Endothelial cell of umbilical vein (primary cell): ENCODE measurements at regions of chr13 and their contacts with region 1.

Region 1: DNA sequence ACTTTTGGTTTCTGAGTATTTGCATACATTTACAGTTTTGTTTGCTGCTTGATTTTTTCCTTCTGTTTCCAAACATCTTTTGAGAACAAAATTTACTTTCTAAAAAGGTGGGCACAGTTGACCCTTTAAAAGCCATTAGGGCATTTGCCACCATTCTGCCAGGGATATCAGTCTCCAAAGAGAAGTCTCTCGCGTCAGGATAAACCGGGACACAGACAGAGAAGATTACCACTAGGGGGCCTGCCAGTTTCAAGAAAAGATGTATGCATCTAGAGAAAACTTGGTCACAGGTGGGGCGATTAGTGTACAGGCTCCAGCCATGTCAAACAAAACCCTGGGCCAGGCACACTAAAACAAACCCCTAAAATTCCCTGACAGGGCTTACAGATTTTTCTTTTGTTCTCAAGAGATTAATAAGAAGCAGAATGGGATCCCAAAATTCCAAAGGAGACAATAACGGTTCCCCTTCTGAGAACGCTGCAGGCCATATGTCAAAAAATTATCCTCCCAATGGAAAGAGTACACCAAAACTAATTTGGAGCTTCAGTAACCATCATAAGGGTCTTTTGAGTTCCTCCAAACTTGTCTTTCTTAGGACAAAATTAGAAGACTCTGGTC is 10.7 kb upstream of the PABPC3 start:
- DNase-seq: peak; percentile 27
- H3K4me3 ChIP-seq: no peak overlapping the region
- H3K27ac ChIP-seq: no peak overlapping the region
- H3K4me1 ChIP-seq: no peaks in the 10 kb centered on the region
- H3K27me3 ChIP-seq: peaks cover 2 to 4% of the 10 kb centered on the region in 2 experiments
- CTCF ChIP-seq: peak; percentile 59 to 66
- POLR2A ChIP-seq: no peak

Region 2: DNA sequence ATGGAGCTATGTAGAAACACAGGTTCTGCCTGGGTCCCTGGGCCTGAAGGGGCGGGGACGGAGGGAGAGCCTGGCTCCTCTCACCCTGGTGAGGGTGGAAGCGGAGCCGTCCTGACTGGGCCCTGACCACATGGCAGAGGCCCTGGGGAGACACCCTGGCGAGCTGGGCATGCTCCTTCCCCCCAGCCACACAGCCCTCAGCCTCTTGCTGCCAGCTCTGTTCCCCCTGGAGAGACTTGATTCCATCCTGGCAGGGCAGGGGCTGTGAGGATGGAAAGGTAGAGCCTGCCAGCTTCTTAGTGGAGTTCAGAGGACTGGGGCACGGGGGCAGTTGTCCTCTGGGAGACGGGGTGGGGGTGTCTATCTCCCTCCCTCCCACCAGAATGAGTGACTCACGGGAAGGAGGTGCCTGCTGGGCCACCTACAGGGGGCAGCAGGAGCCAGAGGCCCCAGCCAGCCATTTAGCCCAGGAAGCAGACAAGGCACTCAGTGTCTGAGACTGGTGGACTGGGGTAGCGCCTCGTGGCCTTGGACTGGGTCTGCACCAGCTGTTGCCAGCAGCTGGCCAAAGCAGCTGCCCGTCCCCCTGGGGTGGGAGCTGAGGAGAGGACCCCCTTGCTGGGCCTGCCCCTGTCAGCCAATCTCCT is 344.1 kb before region 1 on chr13:
- CTCF ChIA-PET with region 1: no interaction called
- POLR2A ChIA-PET with region 1: no interaction called
- dilution Hi-C with region 1: no loop called
- intact Hi-C with region 1: no loop called
- DNase-seq: no peak
- H3K4me3 ChIP-seq: no peak overlapping the region
- H3K27ac ChIP-seq: no peak overlapping the region
- H3K4me1 ChIP-seq: no peaks in the 10 kb centered on the region
- H3K27me3 ChIP-seq: peaks cover 5 to 14% of the 10 kb centered on the region in 2 experiments
- CTCF ChIP-seq: peak in 1 of 2 donors; percentile 33
- POLR2A ChIP-seq: no peak

Region 3: DNA sequence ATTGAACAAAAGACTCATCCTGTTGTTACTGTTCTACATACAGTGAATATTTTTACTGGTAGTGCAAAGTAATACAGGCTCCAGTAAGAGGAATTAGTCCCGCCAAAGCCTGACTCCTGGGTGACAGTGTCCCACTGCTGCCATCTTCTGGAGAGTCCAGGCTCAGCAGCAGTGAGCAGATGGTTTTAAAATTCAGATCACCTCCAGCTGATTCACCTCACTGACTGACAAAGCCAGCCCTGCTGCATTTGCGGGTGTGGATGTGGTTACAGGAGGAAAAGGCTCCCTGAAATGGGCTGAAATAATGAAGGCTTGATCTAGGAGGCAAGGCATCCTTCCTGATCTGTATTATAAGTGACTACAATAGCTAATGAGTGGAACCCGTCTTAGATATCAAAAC is 29.0 kb after region 1 on chr13:
- CTCF ChIA-PET with region 1: interaction called, 11 read pairs
- POLR2A ChIA-PET with region 1: no interaction called
- dilution Hi-C with region 1: no loop called
- intact Hi-C with region 1: loop called (anchors 1 kb)
- DNase-seq: peak; percentile 75
- H3K4me3 ChIP-seq: no peak overlapping the region
- H3K27ac ChIP-seq: no peak overlapping the region
- H3K4me1 ChIP-seq: no peaks in the 10 kb centered on the region
- H3K27me3 ChIP-seq: peaks cover 6 to 7% of the 10 kb centered on the region in 2 experiments
- CTCF ChIP-seq: peak; percentile 82 to 85
- POLR2A ChIP-seq: no peak

Region 4: DNA sequence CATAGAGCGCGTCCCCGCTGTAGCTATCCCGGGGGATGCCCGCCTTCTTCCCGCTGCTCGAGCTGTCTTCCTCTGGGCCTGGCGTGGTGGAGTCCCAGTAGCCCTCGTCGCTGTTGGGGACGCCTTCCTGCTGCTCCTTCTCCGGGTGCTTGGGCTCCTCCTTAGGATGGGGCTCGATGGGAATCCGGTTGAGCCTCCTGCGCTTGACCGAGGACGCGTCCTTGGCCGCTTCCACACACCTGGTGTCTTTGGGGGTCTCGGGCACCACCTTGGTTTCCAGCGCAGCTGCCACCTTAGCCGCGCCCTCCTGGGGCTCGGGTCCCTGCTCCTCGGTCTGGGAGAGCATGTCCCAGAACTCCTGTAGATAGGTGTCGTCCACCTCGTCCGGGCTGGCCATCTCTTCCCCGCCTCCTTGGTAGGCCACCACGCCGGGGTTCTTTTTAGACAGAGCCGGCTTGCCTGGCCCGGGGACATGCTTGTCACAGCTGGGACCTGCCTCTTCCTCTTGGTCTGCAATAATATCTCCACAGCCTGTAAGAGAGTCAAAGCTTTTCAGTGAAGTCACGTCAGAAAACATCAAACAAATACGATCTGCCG is 84.8 kb after region 1 on chr13:
- CTCF ChIA-PET with region 1: no interaction called
- POLR2A ChIA-PET with region 1: no interaction called
- dilution Hi-C with region 1: no loop called
- intact Hi-C with region 1: loop called (anchors 10 kb)
- DNase-seq: no peak
- H3K4me3 ChIP-seq: no peak overlapping the region
- H3K27ac ChIP-seq: no peak overlapping the region
- H3K4me1 ChIP-seq: no peaks in the 10 kb centered on the region
- H3K27me3 ChIP-seq: peaks cover 33 to 68% of the 10 kb centered on the region in 2 experiments
- CTCF ChIP-seq: no peak
- POLR2A ChIP-seq: no peak

Region 5: GRCh38 chr13:25375727-25376358 is 290.6 kb after region 1 on chr13:
- CTCF ChIA-PET with region 1: interaction called, 29 read pairs
- POLR2A ChIA-PET with region 1: no interaction called
- dilution Hi-C with region 1: no loop called
- intact Hi-C with region 1: loop called (anchors 2 kb)
- DNase-seq: peak; percentile 51
- H3K4me3 ChIP-seq: no peak overlapping the region
- H3K27ac ChIP-seq: no peak overlapping the region
- H3K4me1 ChIP-seq: peaks cover 3% of the 10 kb centered on the region
- H3K27me3 ChIP-seq: peaks cover 36 to 50% of the 10 kb centered on the region in 2 experiments
- CTCF ChIP-seq: peak; percentile 58 to 62
- POLR2A ChIP-seq: no peak